Posterior cingulate gyrus (tissue), 11 donors: ENCODE measurements at regions of chr16 and their contacts with region 1.

Region 1: GRCh38 chr16:74480141-74481029 is 59.1 kb upstream of the CLEC18B start:
- DNase-seq: no peak

Region 2: GRCh38 chr16:74501484-74502479 is 21.4 kb after region 1 on chr16:
- intact Hi-C with region 1: loop called (anchors 2 kb)
- DNase-seq: peak in 1 of 10 donors; percentile 19